Thyroid gland (tissue), 4 donors: ENCODE measurements at regions of chr11 and their contacts with region 1.

Region 1: GRCh38 chr11:45110562-45110961 is 35.9 kb upstream of the PRDM11 start:
- DNase-seq: peak; percentile 30 to 37
- H3K4me3 ChIP-seq: no peak overlapping the region
- H3K27ac ChIP-seq: no peak overlapping the region
- H3K4me1 ChIP-seq: no peaks in the 10 kb centered on the region
- H3K27me3 ChIP-seq: no peaks in the 10 kb centered on the region
- CTCF ChIP-seq: peak; percentile 44 to 83 (median 70)
- POLR2A ChIP-seq: no peak

Region 2: GRCh38 chr11:44804449-44805437 is 305.8 kb before region 1 on chr11:
- intact Hi-C with region 1: no loop called
- DNase-seq: peak in 1 of 2 donors; percentile 24
- H3K4me3 ChIP-seq: no peak overlapping the region
- H3K27ac ChIP-seq: peak overlapping the region in 1 of 3 donors; percentile 31
- H3K4me1 ChIP-seq: peaks cover 14 to 32% of the 10 kb centered on the region in 2 donors
- H3K27me3 ChIP-seq: no peaks in the 10 kb centered on the region
- CTCF ChIP-seq: peak in 1 of 6 experiments; percentile 3
- POLR2A ChIP-seq: no peak

Region 3: GRCh38 chr11:45233121-45233803 is 122.7 kb after region 1 on chr11:
- intact Hi-C with region 1: loop called (anchors 10 kb)
- DNase-seq: peak; percentile 71 to 72
- H3K4me3 ChIP-seq: no peak overlapping the region
- H3K27ac ChIP-seq: no peak overlapping the region
- H3K4me1 ChIP-seq: no peaks in the 10 kb centered on the region
- H3K27me3 ChIP-seq: no peaks in the 10 kb centered on the region
- CTCF ChIP-seq: peak; percentile 48 to 88 (median 74)
- POLR2A ChIP-seq: no peak

Region 4: DNA sequence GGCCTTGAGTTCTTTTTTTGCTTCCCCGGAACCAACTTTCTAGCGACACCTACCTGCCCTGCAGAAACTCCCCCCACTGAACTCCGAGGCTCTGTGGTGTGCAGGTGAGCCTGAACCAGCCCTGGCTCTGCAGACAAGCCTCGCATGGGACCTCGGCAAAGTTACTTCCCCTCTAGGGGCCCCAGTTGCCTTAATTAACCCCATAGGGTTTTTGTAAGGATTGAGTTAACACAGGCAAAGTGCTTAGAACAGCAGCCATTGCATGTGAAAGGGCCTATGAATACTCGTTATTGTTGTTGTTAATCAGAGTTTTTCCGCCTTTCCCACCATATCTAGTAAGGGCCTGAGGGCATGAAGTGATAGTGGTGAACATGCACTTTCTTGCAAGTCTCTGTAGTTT is 188.2 kb after region 1 on chr11:
- intact Hi-C with region 1: loop called (anchors 5 kb)
- DNase-seq: no peak
- H3K4me3 ChIP-seq: no peak overlapping the region
- H3K27ac ChIP-seq: no peak overlapping the region
- H3K4me1 ChIP-seq: no peaks in the 10 kb centered on the region
- H3K27me3 ChIP-seq: no peaks in the 10 kb centered on the region
- CTCF ChIP-seq: no peak
- POLR2A ChIP-seq: no peak

Region 5: DNA sequence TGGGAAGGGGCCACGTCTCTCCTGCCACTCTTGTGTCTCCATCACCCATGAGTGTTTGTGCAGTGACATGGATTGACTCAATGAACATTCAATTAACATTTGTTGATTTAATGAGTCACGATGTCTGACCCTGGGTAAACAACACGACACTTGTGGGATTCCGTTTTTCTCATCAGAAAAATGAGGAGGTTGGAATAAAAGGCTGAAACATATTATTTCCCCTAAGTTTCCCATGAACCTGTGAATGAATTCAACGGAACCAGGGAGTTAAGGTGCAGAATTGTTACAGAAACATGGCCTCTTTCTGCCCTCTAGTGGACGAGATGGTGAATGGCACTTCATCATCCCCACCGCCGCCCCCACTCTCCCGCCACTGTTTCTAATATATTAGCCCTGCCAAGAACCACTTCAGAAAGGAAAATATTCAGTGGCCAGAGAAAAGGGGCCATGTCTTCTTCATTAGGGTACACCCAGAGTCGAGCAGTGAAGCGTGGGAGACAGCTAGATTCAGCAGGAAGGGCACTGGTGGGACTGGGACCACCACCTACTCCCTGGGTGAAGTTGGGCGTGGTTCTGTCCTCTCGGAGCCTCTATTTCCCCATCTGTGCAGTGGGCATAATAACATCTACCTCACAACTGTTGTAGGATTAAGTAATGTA is 221.8 kb after region 1 on chr11:
- intact Hi-C with region 1: loop called (anchors 5 kb)
- DNase-seq: peak; percentile 20 to 30
- H3K4me3 ChIP-seq: no peak overlapping the region
- H3K27ac ChIP-seq: peak overlapping the region; percentile 23 to 58 (median 46)
- H3K4me1 ChIP-seq: peaks cover 0 to 8% of the 10 kb centered on the region in 2 donors
- H3K27me3 ChIP-seq: no peaks in the 10 kb centered on the region
- CTCF ChIP-seq: peak; percentile 22 to 85 (median 60)
- POLR2A ChIP-seq: no peak